ENCODE measurements at regions of chr9 and their contacts with region 1.

Region 1: DNA sequence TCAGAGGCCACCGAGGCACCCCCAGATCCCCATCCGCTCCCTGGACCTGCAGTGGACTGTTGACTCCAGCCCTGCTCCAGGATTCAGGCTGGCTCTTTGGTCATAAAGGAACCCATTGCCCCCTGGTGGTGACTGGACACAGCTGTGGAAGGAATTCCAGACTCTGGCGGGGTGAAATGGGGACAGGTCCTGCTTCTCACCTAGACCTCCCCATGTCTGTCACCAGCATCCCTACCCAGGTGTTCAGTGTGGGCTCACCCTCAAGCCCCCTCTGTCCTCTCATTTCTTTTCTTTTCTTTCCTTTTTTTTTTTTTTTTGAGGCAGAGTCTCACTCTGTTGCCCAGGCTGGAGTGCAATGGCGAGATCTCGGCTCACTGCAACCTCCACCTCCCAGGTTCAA is 25.5 kb upstream of the STXBP1 start:
- DNase-seq: peak; percentile 81 to 82
- ATAC-seq: peak; percentile 93 to 94
- H3K4me3 ChIP-seq: no peak overlapping the region
- H3K27ac ChIP-seq: peak overlapping the region; percentile 46 to 73; a peak in 4 of 6 replicates
- H3K4me1 ChIP-seq: peaks cover 38% of the 10 kb centered on the region; the same call in 2 of the 3 replicates
- CTCF ChIP-seq: peak; percentile 84
- EP300 ChIP-seq: no peak
- POLR2A ChIP-seq: no peak
- RAD21 ChIP-seq: peak; percentile 94 to 98

Region 2: GRCh38 chr9:127463911-127464310 is 122.6 kb before region 1 on chr9:
- CTCF ChIA-PET with region 1: no interaction called
- POLR2A ChIA-PET with region 1: no interaction called
- DNase-seq: no peak
- ATAC-seq: no peak
- H3K4me3 ChIP-seq: no peak overlapping the region
- H3K27ac ChIP-seq: no peak overlapping the region
- H3K4me1 ChIP-seq: no peaks in the 10 kb centered on the region
- CTCF ChIP-seq: no peak
- EP300 ChIP-seq: no peak
- POLR2A ChIP-seq: no peak
- RAD21 ChIP-seq: no peak

Region 3: GRCh38 chr9:127525401-127526187 is 60.9 kb before region 1 on chr9:
- CTCF ChIA-PET with region 1: interaction called, 821 read pairs
- POLR2A ChIA-PET with region 1: no interaction called
- DNase-seq: peak in 1 of 2 experiments; percentile 71
- ATAC-seq: 0 out of 6 replicates have a peak, but pooled peaks of 1 of the 2 experiments have one; percentile 12
- H3K4me3 ChIP-seq: no peak overlapping the region
- H3K27ac ChIP-seq: peak overlapping the region in 1 of 2 experiments; percentile 77; a peak in 2 of 6 replicates
- H3K4me1 ChIP-seq: peaks cover 31% of the 10 kb centered on the region
- CTCF ChIP-seq: peak; percentile 37
- EP300 ChIP-seq: no peak
- POLR2A ChIP-seq: no peak
- RAD21 ChIP-seq: peak; percentile 36 to 60; a peak in 3 of 5 replicates

Region 4: GRCh38 chr9:127545196-127546124 is 41.1 kb before region 1 on chr9:
- CTCF ChIA-PET with region 1: interaction called, 88 read pairs
- POLR2A ChIA-PET with region 1: no interaction called
- DNase-seq: peak; percentile 93 to 94
- ATAC-seq: peak; percentile 76 to 87
- H3K4me3 ChIP-seq: peak overlapping the region; percentile 11; the same call in 1 of the 3 replicates
- H3K27ac ChIP-seq: peak overlapping the region; percentile 94 to 96
- H3K4me1 ChIP-seq: peaks cover 91% of the 10 kb centered on the region
- CTCF ChIP-seq: no peak
- EP300 ChIP-seq: peak; percentile 44 to 67; a peak in 3 of 5 replicates
- POLR2A ChIP-seq: no peak
- RAD21 ChIP-seq: peak in 1 of 2 experiments; percentile 24; a peak in 4 of 5 replicates

Region 5: DNA sequence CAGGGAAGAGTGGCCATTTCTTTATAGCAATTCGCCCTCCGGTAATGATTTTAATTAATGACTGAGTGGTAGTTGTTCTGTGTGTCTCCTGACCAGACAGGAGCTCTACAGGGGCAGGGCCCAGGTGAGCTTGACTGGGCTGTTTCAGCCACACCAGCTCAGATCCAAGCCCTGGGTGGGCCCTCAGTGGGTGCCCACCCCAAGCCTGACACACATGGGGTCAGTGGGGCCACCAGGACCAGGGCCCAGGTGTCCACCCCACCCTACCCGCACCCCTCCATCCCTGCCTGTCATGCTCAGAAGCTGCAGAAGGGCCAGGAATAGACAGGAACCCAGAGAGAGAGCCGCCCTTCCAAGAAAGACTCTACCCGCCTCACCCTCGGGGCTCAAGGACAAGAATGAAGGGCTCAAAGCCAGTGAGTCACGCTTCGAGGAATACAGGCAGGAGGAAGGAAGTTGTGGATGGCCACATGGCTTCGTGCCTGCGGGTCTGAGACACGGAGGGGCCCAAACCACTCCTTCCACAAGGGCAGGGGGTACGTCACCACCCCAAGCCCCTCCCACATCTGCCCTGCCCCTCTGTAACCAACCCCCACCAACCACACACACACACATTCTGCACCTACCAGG is 30.7 kb before region 1 on chr9:
- CTCF ChIA-PET with region 1: interaction called, 47 read pairs
- POLR2A ChIA-PET with region 1: no interaction called
- DNase-seq: peak; percentile 90 to 96
- ATAC-seq: peak; percentile 83 to 86
- H3K4me3 ChIP-seq: no peak overlapping the region
- H3K27ac ChIP-seq: peak overlapping the region; percentile 82 to 92
- H3K4me1 ChIP-seq: peaks cover 87% of the 10 kb centered on the region
- CTCF ChIP-seq: no peak
- EP300 ChIP-seq: no peak
- POLR2A ChIP-seq: no peak
- RAD21 ChIP-seq: 0 out of 5 replicates have a peak, but pooled peaks of 1 of the 2 experiments have one; percentile 9

Region 6: DNA sequence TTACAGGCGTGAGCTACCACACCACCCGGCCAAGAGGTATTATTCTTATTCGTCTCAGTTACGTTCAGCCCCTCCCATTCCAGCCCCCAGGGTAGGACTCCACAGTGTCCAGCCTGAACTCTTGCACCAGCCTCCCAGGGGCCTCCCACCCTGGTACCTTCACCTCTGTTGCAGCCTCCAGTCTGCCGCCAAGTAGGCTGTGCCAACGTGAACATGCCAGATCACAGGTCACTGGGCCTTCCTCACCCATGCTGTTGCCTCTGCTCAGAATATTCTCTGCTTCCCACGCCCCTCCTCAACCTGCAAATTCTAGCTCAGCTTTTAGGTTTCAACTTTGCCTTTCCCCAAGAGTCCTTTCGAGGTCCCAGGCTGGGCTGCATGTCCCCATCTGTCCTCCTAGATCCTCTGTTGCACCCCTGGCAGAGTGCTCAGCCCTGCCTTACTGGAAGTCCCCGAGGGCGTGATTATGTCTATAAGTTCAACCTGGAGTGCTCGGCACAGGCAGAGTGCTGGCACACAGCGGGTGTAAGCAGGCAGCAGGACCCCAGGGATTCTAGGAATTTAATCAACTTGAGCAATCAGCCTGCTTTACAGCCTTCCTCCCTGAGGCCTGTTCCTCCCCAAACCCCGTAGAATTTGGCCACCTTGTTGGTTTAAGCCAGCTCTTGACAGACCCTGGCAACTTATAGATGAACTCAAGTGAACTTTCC is 12.5 kb after region 1 on chr9:
- CTCF ChIA-PET with region 1: interaction called, 25 read pairs
- POLR2A ChIA-PET with region 1: no interaction called
- DNase-seq: no peak
- ATAC-seq: peak; percentile 24 to 47; a peak in 3 of 6 replicates
- H3K4me3 ChIP-seq: no peak overlapping the region
- H3K27ac ChIP-seq: no peak overlapping the region
- H3K4me1 ChIP-seq: peaks cover 5% of the 10 kb centered on the region; the same call in 1 of the 3 replicates
- CTCF ChIP-seq: no peak
- EP300 ChIP-seq: no peak
- POLR2A ChIP-seq: no peak
- RAD21 ChIP-seq: no peak

Measured in A549 (cell line).